Endothelial cell of umbilical vein (primary cell): ENCODE measurements at regions of chr2 and their contacts with region 1.

Region 1: GRCh38 chr2:18339326-18339725 is 221.1 kb downstream of the RDH14 start:
- DNase-seq: peak; percentile 78
- H3K4me3 ChIP-seq: no peak overlapping the region
- H3K27ac ChIP-seq: peak overlapping the region; percentile 58
- H3K4me1 ChIP-seq: peaks cover 36% of the 10 kb centered on the region
- H3K27me3 ChIP-seq: no peaks in the 10 kb centered on the region
- CTCF ChIP-seq: no peak
- POLR2A ChIP-seq: no peak

Region 2: DNA sequence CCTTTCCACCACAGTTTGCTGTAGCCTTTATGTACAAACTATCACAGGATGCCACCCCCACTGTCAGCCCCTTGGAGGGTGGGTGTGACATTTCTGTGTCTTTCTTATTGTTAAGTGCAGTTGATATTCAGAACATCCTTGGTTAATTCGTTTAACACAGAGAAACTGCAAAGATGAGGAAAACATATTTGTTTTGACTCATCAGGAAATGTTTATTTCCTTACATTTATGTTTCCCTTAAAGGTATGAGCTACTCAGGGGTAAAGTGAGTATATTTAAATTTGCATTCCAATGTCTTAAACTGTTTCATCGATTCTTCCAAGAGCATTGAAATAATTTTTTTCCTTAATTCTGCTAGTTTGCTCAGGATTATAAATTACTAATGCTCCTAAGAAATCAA is 22.3 kb before region 1 on chr2:
- CTCF ChIA-PET with region 1: no interaction called
- POLR2A ChIA-PET with region 1: no interaction called
- dilution Hi-C with region 1: no loop called
- intact Hi-C with region 1: loop called (anchors 2 kb)
- DNase-seq: peak; percentile 43
- H3K4me3 ChIP-seq: peak overlapping the region in 1 of 3 experiments; percentile 45
- H3K27ac ChIP-seq: no peak overlapping the region
- H3K4me1 ChIP-seq: peaks cover 16% of the 10 kb centered on the region
- H3K27me3 ChIP-seq: no peaks in the 10 kb centered on the region
- CTCF ChIP-seq: no peak
- POLR2A ChIP-seq: no peak

Region 3: DNA sequence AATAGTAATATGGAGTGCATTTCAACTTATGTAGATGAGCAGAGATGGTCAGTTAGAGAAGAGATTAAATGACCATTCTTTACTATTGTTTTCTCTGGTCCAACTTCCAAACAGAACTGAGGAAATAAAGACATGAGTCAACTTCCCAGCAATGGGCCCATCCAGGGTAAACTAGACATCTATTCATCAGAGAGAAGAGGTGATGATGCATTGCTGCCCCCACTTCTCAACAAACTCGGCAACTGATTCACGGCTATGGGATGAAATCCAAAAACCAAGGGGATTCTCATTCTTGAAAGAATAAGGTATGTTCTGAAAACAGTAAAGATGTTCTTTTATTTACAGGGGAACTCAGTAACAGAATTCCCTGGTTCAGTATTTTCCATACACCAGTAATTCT is 30.4 kb after region 1 on chr2:
- CTCF ChIA-PET with region 1: no interaction called
- POLR2A ChIA-PET with region 1: no interaction called
- dilution Hi-C with region 1: no loop called
- intact Hi-C with region 1: loop called (anchors 2 kb)
- DNase-seq: peak; percentile 80
- H3K4me3 ChIP-seq: no peak overlapping the region
- H3K27ac ChIP-seq: peak overlapping the region; percentile 15
- H3K4me1 ChIP-seq: peaks cover 18% of the 10 kb centered on the region
- H3K27me3 ChIP-seq: no peaks in the 10 kb centered on the region
- CTCF ChIP-seq: no peak
- POLR2A ChIP-seq: peak; percentile 23

Region 4: GRCh38 chr2:18432999-18433398 is 93.7 kb after region 1 on chr2:
- CTCF ChIA-PET with region 1: no interaction called
- POLR2A ChIA-PET with region 1: no interaction called
- dilution Hi-C with region 1: no loop called
- intact Hi-C with region 1: no loop called
- DNase-seq: no peak
- H3K4me3 ChIP-seq: no peak overlapping the region
- H3K27ac ChIP-seq: no peak overlapping the region
- H3K4me1 ChIP-seq: peaks cover 5% of the 10 kb centered on the region
- H3K27me3 ChIP-seq: no peaks in the 10 kb centered on the region
- CTCF ChIP-seq: no peak
- POLR2A ChIP-seq: no peak